Pancreas (tissue), 10 donors: ENCODE measurements at regions of chrX and their contacts with region 1.

Region 1: GRCh38 chrX:110167952-110168451 is 149.9 kb downstream of the AMMECR1 start:
- DNase-seq: peak in 3 of 6 donors; percentile 52 to 74 (median 73)
- ATAC-seq: peak in 3 of 4 donors; percentile 27 to 68 (median 66)
- H3K4me3 ChIP-seq: no peak overlapping the region
- H3K27ac ChIP-seq: no peak overlapping the region
- H3K4me1 ChIP-seq: no peaks in the 10 kb centered on the region
- H3K27me3 ChIP-seq: peaks cover 0 to 13% (median 0%) of the 10 kb centered on the region in 4 donors
- CTCF ChIP-seq: peak; percentile 23 to 55 (median 50)

Region 2: GRCh38 chrX:110407910-110408545 is 240.0 kb after region 1 on chrX:
- intact Hi-C with region 1: loop called in 2 of 3 experiments (anchors 5 to 10 kb)
- DNase-seq: peak in 3 of 6 donors; percentile 14 to 63 (median 46)
- ATAC-seq: peak; percentile 66 to 87 (median 84)
- H3K4me3 ChIP-seq: no peak overlapping the region
- H3K27ac ChIP-seq: no peak overlapping the region
- H3K4me1 ChIP-seq: no peaks in the 10 kb centered on the region
- H3K27me3 ChIP-seq: no peaks in the 10 kb centered on the region
- CTCF ChIP-seq: peak; percentile 68 to 90 (median 76)

Region 3: GRCh38 chrX:110412971-110413721 is 245.1 kb after region 1 on chrX:
- intact Hi-C with region 1: loop called in 2 of 3 experiments (anchors 5 to 10 kb)
- DNase-seq: peak; percentile 38 to 87 (median 72)
- ATAC-seq: peak; percentile 79 to 96 (median 92)
- H3K4me3 ChIP-seq: no peak overlapping the region
- H3K27ac ChIP-seq: no peak overlapping the region
- H3K4me1 ChIP-seq: no peaks in the 10 kb centered on the region
- H3K27me3 ChIP-seq: no peaks in the 10 kb centered on the region
- CTCF ChIP-seq: peak; percentile 86 to 92 (median 90)